PC-9 (cell line): ENCODE measurements at regions of chrX and their contacts with region 1.

Region 1: GRCh38 chrX:153599192-153600031 is 473 bp upstream of the CCNQ start:
- DNase-seq: peak; percentile 76 to 96
- H3K4me3 ChIP-seq: peak overlapping the region; percentile 68
- H3K27ac ChIP-seq: no peak overlapping the region
- H3K4me1 ChIP-seq: peaks cover 15% of the 10 kb centered on the region; the same call in 1 of the 2 replicates
- H3K27me3 ChIP-seq: no peaks in the 10 kb centered on the region
- CTCF ChIP-seq: no peak

Region 2: GRCh38 chrX:152861092-152861491 is 738.3 kb before region 1 on chrX:
- CTCF ChIA-PET with region 1: no interaction called
- POLR2A ChIA-PET with region 1: interaction called, 13 read pairs
- intact Hi-C with region 1: no loop called
- DNase-seq: peak; percentile 38 to 90
- H3K4me3 ChIP-seq: no peak overlapping the region
- H3K27ac ChIP-seq: 0 out of 2 replicates have a peak overlapping the region, but pooled peaks have one; percentile 1
- H3K4me1 ChIP-seq: peaks cover 18% of the 10 kb centered on the region
- H3K27me3 ChIP-seq: no peaks in the 10 kb centered on the region
- CTCF ChIP-seq: no peak